ENCODE measurements at regions of chr6 and their contacts with region 1.

Region 1: DNA sequence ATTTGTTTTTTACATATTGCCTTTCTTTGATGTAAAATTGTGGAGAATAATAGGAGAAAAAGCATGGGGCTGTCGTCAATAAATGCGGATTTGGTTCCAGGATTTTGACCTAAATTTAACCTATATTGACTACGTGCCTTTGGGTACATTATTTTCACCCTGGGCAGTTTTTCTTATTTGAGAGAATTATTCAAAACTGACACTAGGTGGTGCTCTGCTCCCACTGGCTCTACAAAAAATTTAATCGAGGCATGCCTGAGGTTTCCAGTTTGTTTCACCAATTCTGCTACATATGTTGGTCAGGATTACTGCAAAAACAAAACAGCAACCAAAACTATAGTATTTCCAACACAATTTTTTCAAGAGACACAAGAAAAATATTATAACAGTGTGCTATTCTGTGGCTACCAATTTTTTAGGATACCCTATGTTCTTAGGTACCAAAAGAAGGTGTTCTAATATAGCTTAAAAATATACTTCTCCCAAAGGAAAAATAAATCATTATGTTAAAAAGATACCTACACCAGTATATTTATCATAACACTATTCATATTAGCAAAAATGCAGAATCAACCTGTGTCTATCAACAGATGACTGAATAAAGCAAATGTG is 48.6 kb upstream of the FABP7 start:
- DNase-seq: peak; percentile 63
- H3K4me3 Mint-ChIP-seq: no peak overlapping the region
- H3K27ac Mint-ChIP-seq: no peak overlapping the region
- H3K4me1 Mint-ChIP-seq: peaks cover 11% of the 10 kb centered on the region
- H3K27me3 Mint-ChIP-seq: no peaks in the 10 kb centered on the region
- CTCF ChIP-seq: peak; percentile 67

Region 2: GRCh38 chr6:122491919-122492555 is 238.8 kb before region 1 on chr6:
- CTCF ChIA-PET with region 1: interaction called, 50 read pairs
- POLR2A ChIA-PET with region 1: no interaction called
- intact Hi-C with region 1: loop called (anchors 1 kb)
- DNase-seq: peak; percentile 80
- H3K4me3 Mint-ChIP-seq: no peak overlapping the region
- H3K27ac Mint-ChIP-seq: peak overlapping the region; percentile 2
- H3K4me1 Mint-ChIP-seq: peaks cover 6% of the 10 kb centered on the region
- H3K27me3 Mint-ChIP-seq: no peaks in the 10 kb centered on the region
- CTCF ChIP-seq: peak; percentile 77

Region 3: DNA sequence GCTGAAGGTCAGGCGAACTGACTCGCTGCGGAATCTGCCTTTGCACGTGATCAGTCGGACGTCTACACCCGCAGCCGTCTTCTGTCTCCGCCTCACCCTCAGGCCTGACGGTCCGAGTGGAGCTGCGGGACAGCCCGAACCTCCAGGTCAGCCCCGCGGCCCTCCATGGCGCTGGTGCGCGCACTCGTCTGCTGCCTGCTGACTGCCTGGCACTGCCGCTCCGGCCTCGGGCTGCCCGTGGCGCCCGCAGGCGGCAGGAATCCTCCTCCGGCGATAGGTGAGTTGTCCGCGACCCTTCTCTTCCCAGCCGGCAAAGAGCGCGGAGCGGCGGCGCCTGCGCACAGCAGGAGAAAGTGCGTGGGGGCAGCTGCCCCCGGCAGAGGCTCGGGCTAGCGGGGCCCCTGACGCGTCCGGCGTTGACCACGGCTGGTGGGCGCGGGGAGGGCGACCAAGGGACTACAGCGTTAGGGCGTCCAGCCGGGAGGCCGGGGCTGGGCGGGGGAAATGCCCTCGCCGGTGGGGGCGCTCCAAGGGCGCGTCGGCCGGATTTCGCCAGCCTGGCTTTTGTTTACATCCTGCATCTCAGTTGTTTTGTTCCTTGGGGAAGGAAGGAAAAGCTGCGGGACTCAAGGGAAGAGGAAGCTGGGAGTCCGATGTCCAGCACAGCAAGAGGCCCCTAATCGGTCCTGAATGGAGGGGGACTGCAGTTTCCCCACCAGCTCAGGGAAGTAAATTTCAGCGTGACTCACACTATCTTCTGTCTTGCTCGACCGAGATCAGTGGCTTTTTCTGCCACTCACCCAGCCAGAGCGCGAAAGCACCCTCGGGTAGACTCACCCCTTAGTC is 58.5 kb after region 1 on chr6 and contains the start of gene SMPDL3A:
- CTCF ChIA-PET with region 1: interaction called, 19 read pairs
- POLR2A ChIA-PET with region 1: interaction called, 55 read pairs
- intact Hi-C with region 1: loop called (anchors 2 kb)
- DNase-seq: peak; percentile 66
- H3K4me3 Mint-ChIP-seq: peak within 1 kb of the TSS; percentile 87
- H3K27ac Mint-ChIP-seq: peak within 1 kb of the TSS; percentile 80
- H3K4me1 Mint-ChIP-seq: peaks cover 15% of the 10 kb centered on the region
- H3K27me3 Mint-ChIP-seq: no peaks in the 10 kb centered on the region
- CTCF ChIP-seq: peak; percentile 35
- total RNA-seq, gene SMPDL3A: 3.5 and 4.7 TPM in 2 replicates

Region 4: DNA sequence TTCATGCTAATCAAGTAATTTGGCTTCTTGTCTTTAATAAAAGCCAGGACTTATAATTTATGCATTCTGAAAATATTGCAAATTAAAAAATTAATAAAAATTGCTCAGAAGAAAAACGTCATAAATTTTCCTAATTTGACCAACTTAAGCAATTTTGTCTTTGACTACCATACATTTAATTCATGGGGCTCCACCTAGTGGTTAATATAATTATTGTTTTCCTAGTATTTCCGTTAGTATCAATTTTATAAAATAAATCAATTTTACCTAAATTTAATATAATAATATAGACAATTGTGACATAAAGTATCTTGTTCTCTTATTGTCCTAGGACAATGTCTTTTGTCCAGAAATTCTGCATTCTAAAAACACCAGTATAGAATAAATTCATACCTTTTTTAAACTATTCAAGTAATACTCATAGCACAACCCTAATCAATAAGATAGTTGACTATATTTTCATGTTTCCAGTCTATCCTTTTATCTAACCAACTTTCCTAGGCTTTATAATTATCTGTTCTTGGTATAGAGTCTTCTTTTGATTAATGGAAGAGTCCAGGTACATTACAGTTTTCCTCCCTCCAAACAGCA is 585.9 kb after region 1 on chr6:
- CTCF ChIA-PET with region 1: interaction called, 6 read pairs
- POLR2A ChIA-PET with region 1: no interaction called
- intact Hi-C with region 1: loop called (anchors 2 kb)
- DNase-seq: peak; percentile 33
- H3K4me3 Mint-ChIP-seq: no peak overlapping the region
- H3K27ac Mint-ChIP-seq: no peak overlapping the region
- H3K4me1 Mint-ChIP-seq: no peaks in the 10 kb centered on the region
- H3K27me3 Mint-ChIP-seq: no peaks in the 10 kb centered on the region
- CTCF ChIP-seq: peak; percentile 53